ENCODE measurements at regions of chr16 and their contacts with region 1.

Region 1: GRCh38 chr16:46801428-46802049 is 29.4 kb downstream of the C16orf87 start:
- DNase-seq: no peak
- ATAC-seq: peak; percentile 41; the same call in 1 of the 2 replicates
- H3K4me3 Mint-ChIP-seq: no peak overlapping the region
- H3K27ac Mint-ChIP-seq: no peak overlapping the region
- H3K4me1 Mint-ChIP-seq: peaks cover 2% of the 10 kb centered on the region; the same call in 1 of the 2 replicates
- H3K27me3 Mint-ChIP-seq: no peaks in the 10 kb centered on the region
- CTCF ChIP-seq: no peak

Region 2: DNA sequence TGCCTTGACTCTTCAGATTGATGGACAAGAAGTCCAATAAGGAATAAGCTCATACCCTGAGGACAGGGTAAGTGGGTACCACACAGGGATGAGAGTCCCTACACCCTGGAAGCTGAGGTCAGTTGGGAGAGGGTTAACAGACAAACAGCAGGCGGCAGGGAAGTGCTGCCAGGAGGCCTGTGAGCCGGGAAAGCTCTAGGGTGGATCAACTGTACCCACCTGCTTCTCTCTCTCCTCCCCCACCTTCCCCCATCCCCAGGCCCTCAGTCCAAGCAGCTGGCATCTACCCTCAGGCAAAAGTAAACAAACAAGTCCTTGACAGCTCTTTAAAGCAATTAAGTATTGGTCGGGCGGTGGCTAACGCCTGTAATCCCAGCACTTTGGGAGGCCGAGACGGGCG is 32.7 kb before region 1 on chr16:
- CTCF ChIA-PET with region 1: no interaction called
- POLR2A ChIA-PET with region 1: no interaction called
- DNase-seq: no peak
- ATAC-seq: no peak
- H3K4me3 Mint-ChIP-seq: no peak overlapping the region
- H3K27ac Mint-ChIP-seq: no peak overlapping the region
- H3K4me1 Mint-ChIP-seq: 0 out of 2 replicates have a peak, but pooled peaks cover 3% of the 10 kb centered on the region
- H3K27me3 Mint-ChIP-seq: no peaks in the 10 kb centered on the region; the same call in 1 of the 2 replicates
- CTCF ChIP-seq: no peak

Region 3: GRCh38 chr16:46789499-46790414 is 11.8 kb before region 1 on chr16:
- CTCF ChIA-PET with region 1: interaction called, 12 read pairs
- POLR2A ChIA-PET with region 1: no interaction called
- DNase-seq: peak; percentile 86
- ATAC-seq: peak; percentile 94
- H3K4me3 Mint-ChIP-seq: peak overlapping the region; percentile 82
- H3K27ac Mint-ChIP-seq: peak overlapping the region; percentile 99
- H3K4me1 Mint-ChIP-seq: peaks cover 34% of the 10 kb centered on the region
- H3K27me3 Mint-ChIP-seq: peaks cover 2% of the 10 kb centered on the region; the same call in 1 of the 2 replicates
- CTCF ChIP-seq: no peak

Region 4: GRCh38 chr16:46812781-46813540 is 11.4 kb after region 1 on chr16:
- CTCF ChIA-PET with region 1: interaction called, 11 read pairs
- POLR2A ChIA-PET with region 1: no interaction called
- DNase-seq: no peak
- ATAC-seq: no peak
- H3K4me3 Mint-ChIP-seq: no peak overlapping the region
- H3K27ac Mint-ChIP-seq: no peak overlapping the region
- H3K4me1 Mint-ChIP-seq: peaks cover 11% of the 10 kb centered on the region
- H3K27me3 Mint-ChIP-seq: no peaks in the 10 kb centered on the region
- CTCF ChIP-seq: no peak